Naive thymus-derived CD4-positive, alpha-beta T cell (primary cell): ENCODE measurements at regions of chr1 and their contacts with region 1.

Region 1: GRCh38 chr1:206507284-206508129 is at the start of gene RASSF5:
- DNase-seq: peak; percentile 64 to 86 (median 74)
- ATAC-seq: peak; percentile 88
- H3K4me3 ChIP-seq: peak within 1 kb of the TSS; percentile 58
- H3K4me3 Mint-ChIP-seq: peak within 1 kb of the TSS; percentile 72 to 90 (median 82)
- H3K27ac ChIP-seq: peak within 1 kb of the TSS; percentile 41
- H3K27ac Mint-ChIP-seq: peak within 1 kb of the TSS in 8 of 9 donors; percentile 28 to 69 (median 51)
- H3K4me1 ChIP-seq: peaks cover 8 to 29% of the 10 kb centered on the region in 2 donors
- H3K4me1 Mint-ChIP-seq: peaks cover 8 to 59% (median 29%) of the 10 kb centered on the region in 7 donors
- H3K27me3 ChIP-seq: no peaks in the 10 kb centered on the region
- H3K27me3 Mint-ChIP-seq: peaks cover 12 to 30% (median 18%) of the 10 kb centered on the region in 5 donors
- total RNA-seq, gene RASSF5: 155 to 240 (median 218) TPM

Region 2: DNA sequence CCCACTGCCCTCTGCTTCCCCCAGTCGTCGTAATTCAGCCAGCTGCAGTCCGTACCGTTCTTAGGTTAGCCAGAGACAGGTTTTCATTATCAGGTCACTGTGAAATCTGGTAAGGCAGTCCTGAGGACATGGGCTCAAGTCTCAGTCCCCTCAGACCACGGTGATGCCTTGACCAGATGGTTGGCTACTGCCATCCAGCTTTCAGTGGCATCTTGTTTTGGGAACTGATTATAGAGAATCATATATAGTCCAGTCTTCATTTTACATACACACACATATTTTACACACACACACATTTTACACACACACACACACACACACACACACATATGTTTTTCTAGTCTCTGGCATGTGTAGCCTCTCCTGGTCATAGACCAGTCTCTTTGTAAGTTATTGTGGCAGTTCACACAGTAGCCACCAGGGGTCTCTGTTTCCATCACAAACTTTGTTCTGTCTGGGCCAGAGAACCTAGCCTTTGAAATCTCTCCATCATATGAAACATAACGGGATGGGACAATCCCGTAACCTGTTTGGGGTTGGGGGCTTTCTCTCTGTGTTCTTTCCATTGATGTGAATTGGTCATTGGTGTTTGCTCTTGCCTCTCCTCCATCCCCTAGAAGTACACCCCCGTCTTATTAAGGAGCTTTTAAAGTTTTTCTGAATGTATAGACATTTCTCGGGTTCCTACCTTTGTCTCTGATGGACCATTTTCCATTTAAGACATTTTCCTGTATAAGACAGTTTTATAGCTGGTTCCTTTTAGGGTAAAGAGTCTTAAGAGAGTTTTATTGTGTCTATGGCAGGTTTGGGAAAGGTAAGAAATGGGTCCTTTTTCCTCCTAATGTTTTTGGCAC is 45.7 kb before region 1 on chr1:
- CTCF ChIA-PET with region 1: interaction called, 3 read pairs
- POLR2A ChIA-PET with region 1: no interaction called
- intact Hi-C with region 1: loop called in 1 of 2 experiments (anchors 2 kb)
- DNase-seq: peak in 8 of 9 donors; percentile 59 to 72 (median 66)
- ATAC-seq: peak; percentile 84
- H3K4me3 ChIP-seq: no peak overlapping the region
- H3K4me3 Mint-ChIP-seq: peak overlapping the region in 1 of 10 donors; percentile 38
- H3K27ac ChIP-seq: no peak overlapping the region
- H3K27ac Mint-ChIP-seq: peak overlapping the region in 1 of 9 donors; percentile 38
- H3K4me1 ChIP-seq: peaks cover 10 to 16% of the 10 kb centered on the region in 2 donors
- H3K4me1 Mint-ChIP-seq: peaks cover 20 to 48% (median 31%) of the 10 kb centered on the region in 7 donors
- H3K27me3 ChIP-seq: no peaks in the 10 kb centered on the region
- H3K27me3 Mint-ChIP-seq: no peaks in the 10 kb centered on the region

Region 3: GRCh38 chr1:206469933-206470691 is 37.4 kb before region 1 on chr1 and contains the start of gene IKBKE:
- CTCF ChIA-PET with region 1: interaction called, 5 read pairs
- POLR2A ChIA-PET with region 1: interaction called, 5 read pairs
- intact Hi-C with region 1: loop called in 1 of 2 experiments (anchors 1 kb)
- DNase-seq: peak in 8 of 9 donors; percentile 37 to 58 (median 44)
- ATAC-seq: peak; percentile 74
- H3K4me3 ChIP-seq: peak within 1 kb of the TSS; percentile 98
- H3K4me3 Mint-ChIP-seq: peak within 1 kb of the TSS; percentile 88 to 95 (median 93)
- H3K27ac ChIP-seq: peak within 1 kb of the TSS; percentile 78
- H3K27ac Mint-ChIP-seq: peak within 1 kb of the TSS; percentile 75 to 97 (median 86)
- H3K4me1 ChIP-seq: peaks cover 64 to 66% of the 10 kb centered on the region in 2 donors
- H3K4me1 Mint-ChIP-seq: peaks cover 55 to 86% (median 78%) of the 10 kb centered on the region in 7 donors
- H3K27me3 ChIP-seq: no peaks in the 10 kb centered on the region
- H3K27me3 Mint-ChIP-seq: no peaks in the 10 kb centered on the region
- total RNA-seq, gene IKBKE: 50.1 to 177 (median 79.1) TPM

Region 4: DNA sequence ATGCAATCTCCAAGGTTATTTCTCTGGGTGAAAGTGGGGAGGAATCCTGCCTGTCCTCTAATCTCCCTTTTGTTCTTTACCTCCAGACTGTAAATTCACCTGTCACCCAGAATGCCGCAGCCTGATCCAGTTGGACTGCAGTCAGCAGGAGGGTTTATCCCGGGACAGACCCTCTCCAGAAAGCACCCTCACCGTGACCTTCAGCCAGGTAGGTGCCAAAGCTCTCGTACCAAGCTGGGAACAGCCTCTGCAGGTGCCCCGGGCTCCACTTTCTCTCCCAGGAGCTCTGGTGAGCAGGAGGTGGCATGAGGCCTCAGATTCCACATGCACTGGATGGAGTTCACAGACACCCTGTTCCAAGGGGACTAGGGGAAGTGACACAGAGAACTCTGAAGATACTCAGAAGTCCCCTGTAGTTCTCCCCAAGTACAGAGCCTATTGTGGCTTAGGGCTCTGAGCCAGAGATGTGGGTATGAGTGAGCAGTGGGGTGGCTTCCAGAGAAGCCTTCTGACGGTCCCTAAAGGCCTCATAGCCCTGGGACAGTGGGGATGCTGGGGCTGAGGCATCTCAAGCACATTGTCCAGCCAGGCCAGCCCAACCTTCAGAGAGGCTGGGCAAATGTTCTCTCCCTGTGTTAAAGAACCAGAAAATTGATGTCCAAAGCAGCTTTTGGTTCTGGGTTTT is 30.7 kb after region 1 on chr1:
- CTCF ChIA-PET with region 1: no interaction called
- POLR2A ChIA-PET with region 1: no interaction called
- intact Hi-C with region 1: no loop called
- DNase-seq: no peak
- ATAC-seq: no peak
- H3K4me3 ChIP-seq: no peak overlapping the region
- H3K4me3 Mint-ChIP-seq: no peak overlapping the region
- H3K27ac ChIP-seq: no peak overlapping the region
- H3K27ac Mint-ChIP-seq: no peak overlapping the region
- H3K4me1 ChIP-seq: no peaks in the 10 kb centered on the region
- H3K4me1 Mint-ChIP-seq: peaks cover 0 to 6% (median 0%) of the 10 kb centered on the region in 7 donors
- H3K27me3 ChIP-seq: no peaks in the 10 kb centered on the region
- H3K27me3 Mint-ChIP-seq: no peaks in the 10 kb centered on the region